SK-N-SH (cell line): ENCODE measurements at regions of chr9 and their contacts with region 1.

Region 1: DNA sequence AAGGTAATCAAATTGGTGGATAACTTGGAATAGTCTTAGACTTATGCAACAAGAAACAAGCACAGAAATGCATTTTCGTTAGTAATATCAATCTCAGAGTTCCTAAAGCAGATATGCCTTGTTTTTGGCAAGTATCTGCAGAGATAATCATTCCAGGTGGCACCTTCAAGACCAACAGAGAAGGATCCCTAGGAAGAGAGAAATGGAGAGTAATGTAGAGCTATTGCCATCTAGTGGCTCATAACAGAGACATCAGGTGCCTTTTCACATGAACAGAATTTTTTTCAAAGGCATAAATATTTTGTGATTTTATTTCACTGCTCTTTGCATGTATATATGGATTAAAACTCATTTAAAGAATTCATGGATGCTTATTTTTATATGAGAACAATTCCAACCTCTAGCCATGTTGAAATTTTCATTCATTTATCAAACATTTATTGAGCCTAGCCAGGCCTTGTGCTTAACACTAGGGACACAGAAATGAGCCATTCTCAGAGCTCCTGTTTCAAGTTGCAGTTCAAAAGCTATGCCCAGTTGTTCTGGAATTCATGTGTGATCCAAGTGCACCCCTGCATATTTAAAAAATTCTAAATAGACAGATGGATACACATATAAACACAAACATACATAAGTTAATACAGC is 117.5 kb upstream of the OR13F1 start:
- DNase-seq: peak; percentile 41
- H3K4me3 ChIP-seq: no peak overlapping the region; a peak in 1 of 4 replicates
- H3K27ac ChIP-seq: no peak overlapping the region
- H3K4me1 ChIP-seq: no peaks in the 10 kb centered on the region; a peak in 1 of 4 replicates
- H3K27me3 ChIP-seq: no peaks in the 10 kb centered on the region
- CTCF ChIP-seq: peak; percentile 87
- EP300 ChIP-seq: no peak
- RAD21 ChIP-seq: peak; percentile 78

Region 2: GRCh38 chr9:103397868-103398600 is 988.5 kb before region 1 on chr9:
- CTCF ChIA-PET with region 1: interaction called, 11 read pairs
- POLR2A ChIA-PET with region 1: no interaction called
- DNase-seq: peak; percentile 30
- H3K4me3 ChIP-seq: no peak overlapping the region; a peak in 1 of 4 replicates
- H3K27ac ChIP-seq: no peak overlapping the region
- H3K4me1 ChIP-seq: no peaks in the 10 kb centered on the region
- H3K27me3 ChIP-seq: no peaks in the 10 kb centered on the region
- CTCF ChIP-seq: peak; percentile 67
- EP300 ChIP-seq: no peak
- RAD21 ChIP-seq: peak; percentile 68

Region 3: DNA sequence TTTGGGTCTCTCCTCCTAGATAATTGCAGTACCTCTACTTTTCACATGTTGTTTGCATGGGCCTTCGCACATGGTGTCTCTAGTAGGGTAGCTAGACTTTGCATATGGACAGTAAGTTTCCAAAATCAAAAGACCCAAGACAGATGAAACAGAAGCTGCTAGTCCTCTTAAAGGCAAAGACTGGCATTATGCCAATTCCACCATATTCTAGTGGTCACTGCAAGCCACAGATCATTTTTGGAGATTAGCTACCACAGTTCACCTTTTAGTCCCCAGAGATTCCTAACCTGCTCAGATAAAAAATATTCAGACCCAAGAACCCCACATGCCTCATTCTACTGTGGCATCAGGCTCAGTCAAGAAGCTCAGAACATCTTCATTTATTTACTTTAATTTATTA is 884.5 kb before region 1 on chr9:
- CTCF ChIA-PET with region 1: no interaction called
- POLR2A ChIA-PET with region 1: no interaction called
- DNase-seq: no peak
- H3K4me3 ChIP-seq: no peak overlapping the region
- H3K27ac ChIP-seq: no peak overlapping the region
- H3K4me1 ChIP-seq: no peaks in the 10 kb centered on the region
- H3K27me3 ChIP-seq: no peaks in the 10 kb centered on the region
- CTCF ChIP-seq: no peak
- EP300 ChIP-seq: no peak
- RAD21 ChIP-seq: no peak

Region 4: DNA sequence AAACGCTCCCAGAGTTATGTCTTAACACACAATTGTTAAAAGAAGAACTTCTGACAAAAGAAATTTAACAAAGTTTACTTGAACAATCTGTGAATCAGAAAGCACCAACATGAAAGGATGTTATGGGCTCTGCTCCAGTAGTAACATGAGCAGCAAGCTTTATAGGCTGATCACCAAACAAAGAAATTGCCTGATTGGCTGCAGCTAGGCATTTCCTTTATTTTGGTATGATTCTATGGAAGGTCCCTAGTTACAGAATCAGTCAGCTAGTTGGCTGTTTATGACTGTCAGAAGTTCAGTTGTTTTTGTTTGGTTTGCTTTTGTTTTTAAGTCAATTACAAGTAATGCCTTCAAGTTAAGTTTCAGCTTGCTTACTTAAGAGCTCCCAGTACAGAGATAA is 394.8 kb before region 1 on chr9:
- CTCF ChIA-PET with region 1: no interaction called
- POLR2A ChIA-PET with region 1: no interaction called
- DNase-seq: no peak
- H3K4me3 ChIP-seq: no peak overlapping the region
- H3K27ac ChIP-seq: no peak overlapping the region
- H3K4me1 ChIP-seq: no peaks in the 10 kb centered on the region
- H3K27me3 ChIP-seq: no peaks in the 10 kb centered on the region
- CTCF ChIP-seq: no peak
- EP300 ChIP-seq: no peak
- RAD21 ChIP-seq: no peak

Region 5: GRCh38 chr9:104177003-104177611 is 209.4 kb before region 1 on chr9:
- CTCF ChIA-PET with region 1: interaction called, 17 read pairs
- POLR2A ChIA-PET with region 1: no interaction called
- DNase-seq: no peak
- H3K4me3 ChIP-seq: no peak overlapping the region
- H3K27ac ChIP-seq: no peak overlapping the region
- H3K4me1 ChIP-seq: no peaks in the 10 kb centered on the region
- H3K27me3 ChIP-seq: no peaks in the 10 kb centered on the region
- CTCF ChIP-seq: peak; percentile 67
- EP300 ChIP-seq: no peak
- RAD21 ChIP-seq: peak; percentile 63

Region 6: GRCh38 chr9:104456831-104457230 is 70.3 kb after region 1 on chr9:
- CTCF ChIA-PET with region 1: no interaction called
- POLR2A ChIA-PET with region 1: no interaction called
- DNase-seq: no peak
- H3K4me3 ChIP-seq: no peak overlapping the region
- H3K27ac ChIP-seq: no peak overlapping the region
- H3K4me1 ChIP-seq: no peaks in the 10 kb centered on the region
- H3K27me3 ChIP-seq: no peaks in the 10 kb centered on the region
- CTCF ChIP-seq: no peak
- EP300 ChIP-seq: no peak
- RAD21 ChIP-seq: no peak